ENCODE measurements at regions of chr13 and their contacts with region 1.

Region 1: DNA sequence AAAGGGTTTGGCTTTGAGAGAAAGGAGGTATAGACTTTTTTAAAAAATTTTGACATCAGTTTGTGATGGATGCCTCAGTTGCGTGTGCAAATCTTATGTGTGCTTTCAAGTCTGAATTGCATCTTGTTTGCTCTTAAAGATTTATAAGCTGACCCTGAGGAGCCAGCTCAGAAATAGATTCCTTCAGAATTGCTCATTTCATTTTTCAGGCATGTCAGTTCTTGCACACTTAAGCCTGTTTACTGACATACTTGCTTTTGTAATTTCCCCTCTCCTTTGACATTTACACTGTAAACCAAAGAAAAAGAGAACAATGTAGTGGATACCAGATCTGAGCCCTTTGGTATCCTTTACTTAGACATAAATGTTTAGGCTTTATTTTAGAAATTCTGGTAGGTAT is 87.6 kb downstream of the RNF17 start:
- DNase-seq: no peak
- ATAC-seq: no peak
- H3K4me3 ChIP-seq: no peak overlapping the region
- H3K27ac ChIP-seq: no peak overlapping the region
- H3K4me1 ChIP-seq: peaks cover 0 to 6% (median 0%) of the 10 kb centered on the region in 9 donors
- H3K27me3 ChIP-seq: peaks cover 0 to 7% (median 0%) of the 10 kb centered on the region in 7 donors
- CTCF ChIP-seq: no peak

Region 2: GRCh38 chr13:23570099-23570920 is 1281.2 kb before region 1 on chr13 and contains the start of gene TNFRSF19:
- intact Hi-C with region 1: no loop called
- DNase-seq: peak; percentile 40 to 76
- ATAC-seq: peak; percentile 72 to 94 (median 84)
- H3K4me3 ChIP-seq: peak within 1 kb of the TSS; percentile 5 to 65 (median 48)
- H3K27ac ChIP-seq: peak within 1 kb of the TSS; percentile 67 to 87 (median 78)
- H3K4me1 ChIP-seq: peaks cover 0 to 18% (median 5%) of the 10 kb centered on the region in 9 donors
- H3K27me3 ChIP-seq: peaks cover 0 to 36% (median 0%) of the 10 kb centered on the region in 7 donors
- CTCF ChIP-seq: no peak
- total RNA-seq, gene TNFRSF19: 25.5 to 49.6 (median 33.7) TPM

Region 3: DNA sequence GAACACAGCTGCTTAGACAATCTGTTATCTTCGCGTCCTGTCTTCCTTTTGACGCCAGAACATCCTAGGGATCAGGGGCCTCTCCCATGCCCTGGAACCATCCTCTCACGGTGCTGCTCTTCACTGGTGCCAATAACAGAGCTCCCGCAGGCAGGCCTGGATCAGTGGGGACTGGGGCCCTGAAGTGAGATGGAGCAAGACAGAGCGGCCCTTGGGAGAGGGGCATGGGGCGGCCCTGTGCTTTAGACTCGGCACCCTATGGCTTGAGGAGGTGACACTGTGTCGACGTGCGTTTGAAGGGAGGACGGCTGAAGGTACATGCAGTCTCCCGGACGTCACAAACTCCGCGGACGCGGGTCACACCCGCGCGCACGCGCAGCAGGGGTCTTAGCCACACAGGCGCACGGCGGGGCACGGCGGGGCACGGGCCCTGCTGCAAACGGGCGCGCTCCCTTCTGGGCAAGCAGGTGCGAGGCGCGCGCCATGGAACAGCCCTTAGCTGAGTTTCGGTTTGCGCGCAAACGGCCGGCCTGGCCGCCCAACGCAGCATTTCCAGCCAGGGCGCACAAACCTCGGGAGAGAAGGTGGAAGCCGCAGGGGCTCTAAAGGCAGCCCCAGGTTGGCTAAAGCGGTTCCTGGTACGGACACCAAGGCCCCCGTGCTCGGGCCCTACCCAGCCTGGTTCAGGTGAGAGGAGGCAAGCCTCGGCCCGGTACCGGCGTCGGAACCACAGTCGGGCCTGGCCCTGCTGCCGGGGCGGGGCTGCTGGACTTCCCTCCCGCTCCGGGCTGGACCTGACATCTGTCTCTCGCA is 104.1 kb before region 1 on chr13:
- intact Hi-C with region 1: no loop called
- DNase-seq: no peak
- ATAC-seq: peak in 3 of 8 donors; percentile 27 to 37 (median 29)
- H3K4me3 ChIP-seq: peak overlapping the region in 9 of 10 donors; percentile 14 to 52 (median 37)
- H3K27ac ChIP-seq: no peak overlapping the region
- H3K4me1 ChIP-seq: peaks cover 0 to 28% (median 16%) of the 10 kb centered on the region in 9 donors
- H3K27me3 ChIP-seq: peaks cover 22 to 87% (median 77%) of the 10 kb centered on the region in 7 donors
- CTCF ChIP-seq: no peak

Region 4: DNA sequence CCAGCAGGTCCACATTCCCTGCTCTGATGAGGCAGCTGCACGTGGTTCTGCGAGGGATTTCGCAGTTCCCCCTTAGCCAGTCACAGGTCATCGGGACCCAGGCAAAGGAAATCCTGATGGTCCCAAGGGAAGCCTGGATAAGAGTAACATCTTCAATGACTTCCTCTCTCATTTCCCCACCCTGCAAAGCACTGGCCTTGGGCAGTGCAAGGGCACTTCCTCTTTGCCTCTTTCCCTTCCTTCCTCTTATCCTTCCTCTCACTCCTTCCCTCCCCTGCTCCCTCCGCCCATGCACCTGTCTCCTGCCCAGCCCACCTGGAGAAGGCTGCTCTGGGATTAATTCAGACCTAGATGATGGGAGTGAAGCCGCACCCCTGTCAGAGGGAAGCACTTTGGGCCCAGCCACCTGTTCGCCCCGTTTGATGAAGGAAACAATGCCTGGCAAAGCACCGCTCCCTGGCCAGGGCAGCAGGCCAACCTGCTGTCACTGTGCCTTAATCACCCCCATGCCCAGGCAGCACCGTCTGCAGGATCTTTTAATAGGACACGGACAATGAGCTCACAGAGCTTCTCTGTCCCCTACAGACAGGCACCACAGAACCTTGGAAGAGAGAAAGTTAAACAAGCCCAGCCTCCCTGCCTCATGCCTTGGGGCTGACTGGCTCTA is 130.9 kb after region 1 on chr13:
- intact Hi-C with region 1: loop called in 1 of 10 experiments (anchors 10 kb)
- DNase-seq: peak; percentile 36 to 48
- ATAC-seq: peak; percentile 82 to 97 (median 94)
- H3K4me3 ChIP-seq: no peak overlapping the region
- H3K27ac ChIP-seq: peak overlapping the region in 1 of 10 donors; percentile 34
- H3K4me1 ChIP-seq: peaks cover 0 to 8% (median 0%) of the 10 kb centered on the region in 9 donors
- H3K27me3 ChIP-seq: peaks cover 0 to 34% (median 20%) of the 10 kb centered on the region in 7 donors
- CTCF ChIP-seq: no peak

Region 5: DNA sequence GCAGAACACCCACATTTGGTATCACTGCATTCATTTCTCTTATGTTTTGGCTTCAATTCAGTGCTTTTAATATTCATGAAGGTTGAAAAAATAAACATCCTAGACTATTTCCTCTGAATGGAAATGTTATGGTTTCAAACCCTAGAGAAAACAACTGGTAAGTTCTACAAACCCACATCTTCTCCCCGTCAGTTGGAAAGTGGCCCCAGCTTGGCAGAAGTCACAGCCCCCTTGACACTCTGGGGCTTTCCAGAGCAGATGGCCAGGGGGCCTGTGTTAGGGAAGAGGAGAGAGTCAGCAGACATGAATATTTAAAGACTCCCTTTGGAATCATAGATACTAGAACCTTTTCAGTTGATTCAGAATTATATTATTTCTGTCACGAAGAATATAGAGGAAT is 1076.4 kb after region 1 on chr13:
- intact Hi-C with region 1: no loop called
- DNase-seq: no peak
- ATAC-seq: no peak
- H3K4me3 ChIP-seq: no peak overlapping the region
- H3K27ac ChIP-seq: no peak overlapping the region
- H3K4me1 ChIP-seq: no peaks in the 10 kb centered on the region
- H3K27me3 ChIP-seq: peaks cover 0 to 30% (median 16%) of the 10 kb centered on the region in 7 donors
- CTCF ChIP-seq: no peak

Measured in heart right ventricle (tissue), 16 donors.